ENCODE measurements at regions of chr9 and their contacts with region 1.

Region 1: DNA sequence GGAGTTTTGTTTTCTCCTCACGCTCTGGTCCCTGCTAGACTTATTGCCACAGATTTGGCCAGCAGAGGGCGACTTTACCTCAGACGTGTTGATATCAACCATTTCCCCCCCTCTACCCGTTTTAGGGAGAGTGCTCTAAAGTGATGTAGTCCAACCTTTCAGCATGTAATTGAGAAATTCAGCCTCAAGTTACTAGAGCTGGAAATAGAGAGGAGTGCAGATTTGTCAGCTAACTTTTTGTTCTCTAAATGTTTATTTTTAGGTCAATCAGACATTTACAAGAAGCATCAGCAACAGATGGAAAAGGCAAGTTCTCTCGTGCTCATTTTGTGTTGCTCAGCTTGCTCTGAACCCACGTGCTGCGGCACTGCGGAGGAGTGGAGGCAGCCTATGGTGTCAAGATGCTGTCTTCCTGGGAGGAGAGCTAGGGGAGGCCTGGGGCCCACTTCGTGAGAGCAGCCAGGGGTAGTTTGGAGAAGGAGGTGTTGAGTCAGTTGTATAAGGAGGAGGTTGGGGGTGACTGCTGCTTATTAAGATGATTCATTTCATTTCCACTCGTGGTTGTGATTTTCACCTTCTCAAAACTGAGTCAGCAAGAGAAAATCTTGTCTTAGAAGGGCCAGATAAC is 53.6 kb downstream of the GPR107 start:
- DNase-seq: peak; percentile 88 to 92
- H3K4me3 ChIP-seq: no peak overlapping the region
- H3K27ac ChIP-seq: no peak overlapping the region
- H3K4me1 ChIP-seq: peaks cover 14 to 22% of the 10 kb centered on the region in 2 donors
- H3K27me3 ChIP-seq: no peaks in the 10 kb centered on the region
- CTCF ChIP-seq: peak; percentile 29 to 89 (median 74)
- POLR2A ChIP-seq: no peak

Region 2: DNA sequence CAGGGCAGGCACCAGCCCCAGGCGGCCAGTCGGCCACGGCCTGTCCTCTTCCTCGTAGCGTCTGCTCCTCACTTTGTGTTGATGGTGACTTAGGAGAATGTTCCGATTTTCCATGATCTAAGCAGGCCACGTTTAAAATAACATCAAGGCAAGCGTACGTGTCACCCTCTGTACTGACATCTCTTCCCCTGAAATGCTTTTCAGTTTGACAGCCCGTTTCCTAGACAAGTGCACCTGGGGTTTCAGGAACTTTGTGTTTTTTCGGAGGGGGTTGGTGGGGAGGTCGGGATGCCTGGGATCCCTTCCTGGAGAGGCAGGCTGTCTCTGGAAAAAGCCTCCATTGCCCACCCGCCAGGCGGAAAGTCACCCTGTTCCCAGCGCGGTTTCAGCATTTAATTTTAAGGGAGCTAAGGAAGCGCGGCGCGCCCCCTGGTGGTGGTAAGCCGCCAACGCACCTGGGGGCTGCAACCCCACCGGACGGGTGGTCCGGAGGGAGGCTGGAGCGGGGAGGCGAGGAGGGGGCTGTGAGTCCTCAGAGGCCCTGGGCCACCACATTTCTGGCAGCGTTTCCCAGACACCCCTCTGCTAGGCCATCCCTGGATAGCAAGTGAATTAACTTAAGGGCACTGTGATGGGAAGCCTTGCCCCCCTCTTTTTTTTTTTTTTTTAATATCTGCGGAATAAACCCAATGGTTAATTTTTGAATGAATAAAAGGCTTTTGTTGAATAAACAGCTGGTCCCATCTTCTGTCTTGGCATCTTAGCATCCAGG is 128.7 kb after region 1 on chr9:
- intact Hi-C with region 1: loop called (anchors 2 kb)
- DNase-seq: peak; percentile 59 to 68
- H3K4me3 ChIP-seq: no peak overlapping the region
- H3K27ac ChIP-seq: peak overlapping the region in 2 of 3 donors; percentile 96
- H3K4me1 ChIP-seq: peaks cover 47% of the 10 kb centered on the region in 2 donors
- H3K27me3 ChIP-seq: no peaks in the 10 kb centered on the region
- CTCF ChIP-seq: peak; percentile 95 to 99 (median 98)
- POLR2A ChIP-seq: no peak

Region 3: DNA sequence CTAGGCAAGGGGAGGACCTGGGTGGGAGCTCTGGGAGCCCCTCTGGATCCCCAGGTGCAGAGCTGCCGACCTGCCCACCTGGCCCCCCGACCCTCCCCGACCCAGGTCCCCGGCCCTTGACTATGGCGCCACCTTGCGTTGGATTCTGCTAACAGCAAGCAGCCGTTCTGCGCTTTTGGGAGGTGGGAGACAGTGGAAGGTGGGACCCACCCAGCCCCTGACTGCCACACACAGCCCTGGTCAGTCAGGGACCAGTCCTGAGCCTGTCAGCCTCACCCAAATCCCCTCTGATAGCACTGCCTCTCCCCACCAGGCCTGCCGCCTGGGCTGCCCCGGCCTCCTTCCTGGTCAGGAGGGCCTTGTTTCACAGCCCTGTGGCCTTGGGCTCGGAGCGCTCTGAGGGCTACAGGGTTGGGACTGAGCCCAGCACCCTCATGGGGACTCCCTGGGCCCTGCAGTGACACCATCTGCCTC is 236.1 kb after region 1 on chr9:
- intact Hi-C with region 1: loop called (anchors 2 kb)
- DNase-seq: peak in 1 of 2 donors; percentile 33
- H3K4me3 ChIP-seq: no peak overlapping the region
- H3K27ac ChIP-seq: no peak overlapping the region
- H3K4me1 ChIP-seq: no peaks in the 10 kb centered on the region
- H3K27me3 ChIP-seq: no peaks in the 10 kb centered on the region
- CTCF ChIP-seq: peak; percentile 49 to 85 (median 74)
- POLR2A ChIP-seq: no peak

Measured in thyroid gland (tissue), 4 donors.